ENCODE measurements at regions of chr7 and their contacts with region 1.

Region 1: GRCh38 chr7:45923290-45923689 is 2.2 kb upstream of the IGFBP3 start:
- DNase-seq: peak; percentile 72
- ATAC-seq: no peak
- H3K4me3 ChIP-seq: no peak overlapping the region; the same call in 1 of the 2 replicates
- H3K27ac ChIP-seq: no peak overlapping the region
- H3K4me1 ChIP-seq: peaks cover 14% of the 10 kb centered on the region
- H3K27me3 ChIP-seq: no peaks in the 10 kb centered on the region
- CTCF ChIP-seq: peak; percentile 97
- POLR2A ChIP-seq: peak; percentile 47; the same call in 1 of the 2 replicates
- RAD21 ChIP-seq: peak; percentile 99

Region 2: DNA sequence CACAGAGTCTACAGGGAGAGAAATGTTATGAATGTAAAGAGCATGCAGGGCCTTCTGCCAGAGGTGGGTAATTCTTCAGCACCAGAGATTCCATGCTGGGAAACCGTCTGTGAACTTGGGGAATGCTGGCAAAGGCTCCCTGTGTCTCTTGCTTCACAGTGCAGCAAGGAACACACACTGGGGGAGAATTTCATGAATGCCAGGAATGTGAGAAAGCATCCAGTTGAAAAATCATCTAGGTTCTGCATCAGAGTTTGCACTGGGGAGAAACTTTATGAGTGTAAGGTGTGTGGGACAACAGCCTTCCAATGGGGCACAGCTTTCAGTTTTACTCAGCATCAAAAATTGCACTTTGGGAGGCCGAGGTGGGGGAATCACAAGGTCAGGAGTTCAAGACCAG is 222.1 kb after region 1 on chr7:
- CTCF ChIA-PET with region 1: interaction called, 3 read pairs
- POLR2A ChIA-PET with region 1: no interaction called
- dilution Hi-C with region 1: no loop called
- in situ Hi-C with region 1: no loop called
- intact Hi-C with region 1: loop called (anchors 1 kb)
- DNase-seq: peak; percentile 99
- ATAC-seq: peak; percentile 93
- H3K4me3 ChIP-seq: no peak overlapping the region
- H3K27ac ChIP-seq: peak overlapping the region; percentile 64
- H3K4me1 ChIP-seq: peaks cover 23% of the 10 kb centered on the region
- H3K27me3 ChIP-seq: no peaks in the 10 kb centered on the region
- CTCF ChIP-seq: no peak
- POLR2A ChIP-seq: no peak
- RAD21 ChIP-seq: no peak

Region 3: DNA sequence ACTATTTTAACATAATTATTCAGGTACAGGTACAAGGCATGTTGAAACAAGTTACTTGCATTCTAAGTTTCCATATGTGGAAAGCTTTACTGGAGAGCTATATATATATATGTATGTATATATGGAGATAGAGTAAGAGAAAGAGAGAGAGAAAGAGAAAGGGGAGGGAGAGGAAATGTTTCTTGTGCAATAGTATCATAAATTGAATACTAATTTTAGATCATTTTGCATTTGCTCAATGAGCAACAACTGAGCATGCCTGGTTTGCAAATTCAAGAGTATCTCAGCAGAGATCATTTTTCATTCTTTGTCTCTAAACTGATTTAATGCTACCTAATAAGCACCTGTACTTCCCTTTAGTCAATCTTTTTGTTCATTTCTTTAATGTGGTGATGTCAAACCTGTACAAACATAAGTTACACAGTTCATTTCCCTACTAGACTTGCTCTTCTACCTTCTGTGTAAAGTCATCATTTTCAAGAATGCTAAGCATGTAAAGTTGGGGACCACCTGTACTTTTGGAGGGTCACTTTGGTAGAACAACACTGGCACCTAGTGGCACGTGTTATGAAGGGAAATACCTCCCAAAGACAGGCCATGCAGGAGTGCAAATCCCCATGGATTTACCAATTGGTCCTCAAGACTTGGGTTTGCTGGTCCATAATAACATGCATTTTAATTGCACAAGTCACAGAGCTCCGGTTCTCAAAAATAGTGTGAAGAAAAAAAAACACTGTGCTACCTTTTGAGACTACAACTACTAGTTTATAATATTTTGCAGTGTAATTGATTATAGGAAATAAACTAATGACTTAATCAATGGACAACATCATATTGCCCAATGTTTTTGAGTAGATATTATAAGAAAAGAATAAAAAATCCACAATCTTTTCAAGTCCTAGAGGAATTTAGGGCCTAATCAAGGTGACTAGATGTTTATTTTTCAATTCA is 429.0 kb after region 1 on chr7:
- CTCF ChIA-PET with region 1: interaction called, 30 read pairs
- POLR2A ChIA-PET with region 1: no interaction called
- dilution Hi-C with region 1: no loop called
- in situ Hi-C with region 1: loop called (anchors 5 kb)
- intact Hi-C with region 1: loop called (anchors 1 kb)
- DNase-seq: peak; percentile 72
- ATAC-seq: peak; percentile 70
- H3K4me3 ChIP-seq: no peak overlapping the region
- H3K27ac ChIP-seq: no peak overlapping the region
- H3K4me1 ChIP-seq: peaks cover 6% of the 10 kb centered on the region; the same call in 1 of the 2 replicates
- H3K27me3 ChIP-seq: no peaks in the 10 kb centered on the region
- CTCF ChIP-seq: peak; percentile 83
- POLR2A ChIP-seq: no peak
- RAD21 ChIP-seq: peak; percentile 97

Region 4: DNA sequence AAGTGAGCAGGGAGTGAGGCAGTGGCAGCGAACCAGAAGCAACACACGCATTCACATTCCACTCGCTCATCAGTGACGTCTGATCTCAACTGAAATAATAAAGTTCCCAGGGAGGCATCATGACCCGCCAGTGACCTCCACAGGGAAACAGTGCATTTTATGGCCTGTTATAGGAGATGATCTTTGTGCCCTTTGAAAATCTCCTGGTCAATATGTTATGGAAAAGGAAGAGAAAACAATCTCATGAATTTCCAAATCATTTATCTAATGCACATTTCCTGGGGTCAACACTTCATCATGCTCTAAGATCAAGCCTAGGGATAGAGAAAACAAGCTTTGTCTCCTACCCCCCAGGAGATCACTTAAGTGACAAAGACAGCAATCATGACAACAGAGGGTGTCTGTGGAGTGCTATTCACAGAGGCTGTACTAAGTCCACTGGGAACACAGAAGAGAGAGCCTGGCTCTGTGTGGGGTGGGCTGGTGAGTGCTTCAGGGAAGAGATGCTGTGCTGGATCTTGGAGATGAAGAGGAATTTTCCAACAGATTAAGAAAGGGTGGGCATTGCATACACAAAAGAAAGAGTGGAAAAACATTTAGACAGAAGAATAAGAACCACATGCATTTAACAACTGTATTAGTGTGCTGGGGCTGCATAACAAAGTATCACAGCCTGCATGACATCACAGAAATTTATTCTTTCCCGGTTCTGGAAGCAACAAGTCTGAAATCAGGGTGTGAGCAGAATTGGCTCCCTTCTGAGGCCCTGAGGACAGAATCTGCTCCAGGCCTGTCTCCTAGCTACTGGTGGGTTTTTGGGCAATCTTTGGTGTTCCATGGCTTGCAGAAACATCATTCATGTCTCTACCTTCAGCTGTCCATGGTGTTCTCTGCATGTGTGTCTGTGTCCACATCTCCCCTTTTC is 611.6 kb after region 1 on chr7:
- CTCF ChIA-PET with region 1: no interaction called
- POLR2A ChIA-PET with region 1: no interaction called
- dilution Hi-C with region 1: no loop called
- in situ Hi-C with region 1: no loop called
- intact Hi-C with region 1: loop called (anchors 5 kb)
- DNase-seq: peak; percentile 93
- ATAC-seq: peak; percentile 85
- H3K4me3 ChIP-seq: no peak overlapping the region
- H3K27ac ChIP-seq: peak overlapping the region; percentile 76
- H3K4me1 ChIP-seq: peaks cover 8% of the 10 kb centered on the region
- H3K27me3 ChIP-seq: no peaks in the 10 kb centered on the region
- CTCF ChIP-seq: no peak
- POLR2A ChIP-seq: no peak
- RAD21 ChIP-seq: no peak

Region 5: GRCh38 chr7:47088329-47089067 is 1165.2 kb after region 1 on chr7:
- CTCF ChIA-PET with region 1: interaction called, 7 read pairs
- POLR2A ChIA-PET with region 1: no interaction called
- dilution Hi-C with region 1: no loop called
- in situ Hi-C with region 1: loop called (anchors 5 kb)
- intact Hi-C with region 1: loop called (anchors 1 kb)
- DNase-seq: peak; percentile 67
- ATAC-seq: peak; percentile 69
- H3K4me3 ChIP-seq: no peak overlapping the region
- H3K27ac ChIP-seq: no peak overlapping the region
- H3K4me1 ChIP-seq: peaks cover 22% of the 10 kb centered on the region
- H3K27me3 ChIP-seq: no peaks in the 10 kb centered on the region
- CTCF ChIP-seq: peak; percentile 89
- POLR2A ChIP-seq: no peak
- RAD21 ChIP-seq: peak; percentile 94